PC-9 (cell line): ENCODE measurements at regions of chr7 and their contacts with region 1.

Region 1: GRCh38 chr7:92528188-92528957 is at the starts of genes PEX1 and RBM48:
- DNase-seq: peak; percentile 97 to 99
- H3K4me3 ChIP-seq: peak within 1 kb of the TSS; percentile 95
- H3K27ac ChIP-seq: peak within 1 kb of the TSS; percentile 52
- H3K4me1 ChIP-seq: peaks cover 18% of the 10 kb centered on the region
- H3K27me3 ChIP-seq: no peaks in the 10 kb centered on the region
- CTCF ChIP-seq: peak; percentile 50
- total RNA-seq, gene PEX1: 13.4 and 20.2 TPM in 2 replicates
- total RNA-seq, gene RBM48: 7.4 and 11.5 TPM in 2 replicates

Region 2: GRCh38 chr7:91872069-91872468 is 656.3 kb before region 1 on chr7:
- CTCF ChIA-PET with region 1: no interaction called
- POLR2A ChIA-PET with region 1: interaction called, 12 read pairs
- intact Hi-C with region 1: no loop called
- DNase-seq: no peak
- H3K4me3 ChIP-seq: no peak overlapping the region
- H3K27ac ChIP-seq: no peak overlapping the region
- H3K4me1 ChIP-seq: no peaks in the 10 kb centered on the region
- H3K27me3 ChIP-seq: no peaks in the 10 kb centered on the region
- CTCF ChIP-seq: no peak

Region 3: GRCh38 chr7:91929463-91929862 is 598.9 kb before region 1 on chr7:
- CTCF ChIA-PET with region 1: no interaction called
- POLR2A ChIA-PET with region 1: interaction called, 11 read pairs
- intact Hi-C with region 1: no loop called
- DNase-seq: no peak
- H3K4me3 ChIP-seq: no peak overlapping the region
- H3K27ac ChIP-seq: no peak overlapping the region
- H3K4me1 ChIP-seq: peaks cover 8% of the 10 kb centered on the region
- H3K27me3 ChIP-seq: no peaks in the 10 kb centered on the region
- CTCF ChIP-seq: no peak

Region 4: GRCh38 chr7:92447345-92448204 is 80.8 kb before region 1 on chr7 and contains the start of gene GATAD1:
- CTCF ChIA-PET with region 1: interaction called, 10 read pairs
- POLR2A ChIA-PET with region 1: interaction called, 8 read pairs
- intact Hi-C with region 1: loop called (anchors 2 kb)
- DNase-seq: peak; percentile 81 to 92
- H3K4me3 ChIP-seq: peak within 1 kb of the TSS; percentile 60
- H3K27ac ChIP-seq: peak within 1 kb of the TSS; percentile 55
- H3K4me1 ChIP-seq: peaks cover 9% of the 10 kb centered on the region
- H3K27me3 ChIP-seq: no peaks in the 10 kb centered on the region
- CTCF ChIP-seq: peak; percentile 86; the same call in 1 of the 2 replicates
- total RNA-seq, gene GATAD1: 39.4 and 41.7 TPM in 2 replicates

Region 5: DNA sequence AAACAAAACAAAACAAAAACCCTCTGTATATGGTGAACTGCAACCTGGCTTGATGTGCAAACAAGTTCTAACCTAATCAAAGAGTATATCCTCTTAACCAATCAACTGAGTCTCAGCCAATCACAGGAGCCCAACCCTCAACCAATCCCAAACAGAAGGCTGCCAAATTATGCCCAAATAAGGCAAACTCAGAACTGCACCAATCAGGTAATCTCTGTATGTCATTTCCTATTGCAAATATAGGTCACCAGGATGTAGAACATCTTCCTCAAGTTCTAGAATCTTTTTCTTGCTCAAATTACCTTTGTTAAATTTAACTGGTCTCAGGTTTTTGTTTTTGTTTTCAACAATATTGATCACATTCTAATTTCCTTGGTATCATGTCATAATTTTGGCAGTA is 56.6 kb after region 1 on chr7:
- CTCF ChIA-PET with region 1: interaction called, 18 read pairs
- POLR2A ChIA-PET with region 1: interaction called, 3 read pairs
- intact Hi-C with region 1: no loop called
- DNase-seq: peak in 1 of 2 experiments; percentile 62
- H3K4me3 ChIP-seq: no peak overlapping the region
- H3K27ac ChIP-seq: no peak overlapping the region
- H3K4me1 ChIP-seq: peaks cover 27% of the 10 kb centered on the region
- H3K27me3 ChIP-seq: no peaks in the 10 kb centered on the region
- CTCF ChIP-seq: no peak

Region 6: GRCh38 chr7:92598310-92598981 is 70.1 kb after region 1 on chr7:
- CTCF ChIA-PET with region 1: no interaction called
- POLR2A ChIA-PET with region 1: no interaction called
- intact Hi-C with region 1: no loop called
- DNase-seq: no peak
- H3K4me3 ChIP-seq: no peak overlapping the region
- H3K27ac ChIP-seq: no peak overlapping the region
- H3K4me1 ChIP-seq: no peaks in the 10 kb centered on the region; the same call in 1 of the 2 replicates
- H3K27me3 ChIP-seq: no peaks in the 10 kb centered on the region
- CTCF ChIP-seq: no peak

Region 7: DNA sequence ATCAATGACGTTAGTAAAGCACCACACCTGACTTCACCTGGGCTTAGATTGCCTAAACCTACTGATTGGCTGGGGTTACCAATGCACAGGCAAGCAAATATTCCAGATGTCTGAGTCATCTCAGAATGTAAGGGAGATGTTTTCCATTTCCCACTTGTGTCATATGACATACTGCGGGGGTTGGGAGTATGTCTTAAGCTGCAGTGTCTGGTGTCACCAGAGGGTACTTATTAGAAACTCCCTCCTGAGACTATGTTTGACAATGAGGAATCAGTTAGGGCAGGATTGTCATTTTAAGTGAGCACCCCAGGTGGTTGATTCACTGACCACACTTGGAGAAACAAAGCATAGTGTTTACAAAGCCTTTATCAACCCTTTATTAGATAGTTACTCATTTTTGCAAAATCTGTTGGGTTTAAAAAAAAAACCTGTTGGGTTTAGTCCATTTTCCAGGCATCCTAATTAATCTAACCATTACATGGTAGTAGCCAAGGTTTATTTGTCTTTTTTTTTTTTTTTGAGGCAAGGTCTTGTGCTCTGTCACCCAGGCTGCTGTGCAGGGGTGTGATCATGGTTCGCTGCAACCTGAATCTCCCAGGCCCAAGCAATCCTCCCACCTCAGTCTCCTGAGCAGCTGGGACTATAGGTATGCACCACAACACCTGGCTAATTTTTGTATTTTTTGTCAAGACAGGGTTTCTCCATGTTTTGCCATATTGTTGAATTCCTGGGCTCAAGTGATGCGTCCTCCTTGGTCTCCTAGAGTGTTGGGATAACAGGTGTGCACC is 235.5 kb after region 1 on chr7:
- CTCF ChIA-PET with region 1: no interaction called
- POLR2A ChIA-PET with region 1: no interaction called
- intact Hi-C with region 1: no loop called
- DNase-seq: peak; percentile 74 to 98
- H3K4me3 ChIP-seq: no peak overlapping the region
- H3K27ac ChIP-seq: peak overlapping the region; percentile 93
- H3K4me1 ChIP-seq: peaks cover 67% of the 10 kb centered on the region
- H3K27me3 ChIP-seq: no peaks in the 10 kb centered on the region
- CTCF ChIP-seq: no peak

Region 8: GRCh38 chr7:92872701-92873100 is 344.3 kb after region 1 on chr7:
- CTCF ChIA-PET with region 1: no interaction called
- POLR2A ChIA-PET with region 1: no interaction called
- intact Hi-C with region 1: no loop called
- DNase-seq: no peak
- H3K4me3 ChIP-seq: no peak overlapping the region
- H3K27ac ChIP-seq: no peak overlapping the region
- H3K4me1 ChIP-seq: no peaks in the 10 kb centered on the region
- H3K27me3 ChIP-seq: no peaks in the 10 kb centered on the region
- CTCF ChIP-seq: no peak

Region 9: DNA sequence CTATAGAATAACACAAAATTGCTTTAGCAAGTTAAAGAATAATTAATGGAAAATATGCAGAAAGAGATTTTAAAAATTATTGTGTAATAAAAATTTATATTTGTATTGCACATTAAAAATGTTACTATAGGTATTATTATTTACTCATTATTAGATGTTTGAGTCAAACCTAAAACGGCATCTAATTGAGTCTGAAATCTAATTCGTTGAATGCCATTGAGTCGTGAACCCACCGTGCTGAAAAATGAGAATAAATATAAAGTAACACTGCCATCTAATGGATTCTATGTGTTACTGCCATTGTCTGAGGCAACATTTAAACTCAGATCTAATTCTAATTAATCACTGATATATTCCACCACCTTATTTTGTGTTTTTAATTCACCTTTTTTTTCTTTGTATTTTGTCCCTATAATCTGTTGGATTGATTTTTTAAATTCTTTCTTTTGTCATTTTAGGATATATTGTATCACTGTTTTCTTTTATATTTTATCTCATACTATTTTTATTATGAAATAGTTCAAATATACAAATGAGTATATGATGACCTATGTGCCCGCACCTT is 527.3 kb after region 1 on chr7:
- CTCF ChIA-PET with region 1: no interaction called
- POLR2A ChIA-PET with region 1: no interaction called
- intact Hi-C with region 1: loop called (anchors 5 kb)
- DNase-seq: peak in 1 of 2 experiments; percentile 50
- H3K4me3 ChIP-seq: no peak overlapping the region
- H3K27ac ChIP-seq: no peak overlapping the region
- H3K4me1 ChIP-seq: no peaks in the 10 kb centered on the region
- H3K27me3 ChIP-seq: no peaks in the 10 kb centered on the region
- CTCF ChIP-seq: peak; percentile 87

Region 10: DNA sequence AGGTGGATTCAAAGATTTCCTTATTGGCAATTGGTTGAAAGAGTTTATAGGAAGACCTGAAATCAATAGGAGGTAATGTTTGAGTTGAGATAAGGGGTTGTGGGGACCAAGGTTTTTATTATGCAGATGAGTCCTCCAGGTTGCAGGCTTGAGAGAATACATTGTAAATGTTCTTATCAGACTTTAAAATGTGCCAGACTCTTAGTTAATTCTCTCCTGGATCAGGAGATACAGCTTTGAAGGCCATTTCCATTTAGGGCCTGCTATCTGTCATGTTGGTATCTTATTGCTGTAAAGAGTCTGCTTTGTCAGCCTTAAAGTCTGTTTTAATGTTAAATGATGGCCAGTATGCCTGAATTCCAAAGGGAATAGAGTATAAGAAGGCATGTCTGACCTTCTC is 1107.9 kb after region 1 on chr7:
- CTCF ChIA-PET with region 1: no interaction called
- POLR2A ChIA-PET with region 1: no interaction called
- intact Hi-C with region 1: no loop called
- DNase-seq: no peak
- H3K4me3 ChIP-seq: no peak overlapping the region
- H3K27ac ChIP-seq: no peak overlapping the region
- H3K4me1 ChIP-seq: no peaks in the 10 kb centered on the region
- H3K27me3 ChIP-seq: no peaks in the 10 kb centered on the region
- CTCF ChIP-seq: no peak